ENCODE measurements at regions of chr15 and their contacts with region 1.

Region 1: GRCh38 chr15:77024271-77025082 is 29.6 kb downstream of the PSTPIP1 start:
- DNase-seq: peak; percentile 38 to 62 (median 51)
- H3K4me3 ChIP-seq: no peak overlapping the region
- H3K27ac ChIP-seq: no peak overlapping the region
- H3K4me1 ChIP-seq: peaks cover 2 to 59% (median 28%) of the 10 kb centered on the region in 4 experiments
- H3K27me3 ChIP-seq: no peaks in the 10 kb centered on the region

Region 2: DNA sequence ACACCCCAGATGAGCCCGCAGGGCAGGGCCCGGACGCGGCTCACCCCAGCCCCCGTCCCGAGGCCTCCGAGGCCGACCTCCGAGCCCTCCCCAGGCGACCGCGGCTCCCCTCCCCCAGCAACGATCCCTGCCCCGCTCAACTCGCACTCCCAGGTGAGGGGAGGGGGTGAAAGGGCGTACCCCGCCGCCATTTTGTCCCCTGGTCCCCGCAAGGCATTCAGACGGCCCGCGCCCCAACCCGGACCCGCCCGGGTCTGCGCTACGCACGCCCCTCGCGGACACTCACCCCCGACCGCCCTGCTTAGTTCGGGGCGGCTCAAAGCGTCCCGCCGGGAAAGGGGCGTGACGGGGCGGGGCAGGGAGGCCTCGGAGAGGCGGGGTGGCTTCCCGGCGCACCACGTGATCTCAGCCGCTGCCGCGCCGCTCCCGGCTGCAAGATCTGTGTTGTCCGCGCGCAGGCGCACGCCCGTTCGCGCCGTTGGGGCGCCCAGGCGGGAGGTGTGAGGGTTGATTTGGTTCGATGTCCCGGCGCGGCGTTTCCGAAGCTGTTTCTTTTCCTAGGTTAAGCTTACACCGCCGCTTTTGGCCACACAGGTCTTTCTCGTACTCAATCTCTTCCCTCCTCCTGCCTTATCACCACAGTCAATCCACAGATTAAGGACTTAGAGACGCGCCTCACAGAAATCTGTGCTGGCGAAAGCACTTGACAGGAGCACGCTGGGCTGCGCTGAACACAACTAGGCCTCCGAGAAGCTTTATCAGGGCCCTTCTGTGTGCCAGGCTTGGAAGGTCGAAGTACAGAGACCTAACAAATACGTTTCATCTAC is 119.3 kb before region 1 on chr15 and contains the start of gene SCAPER:
- CTCF ChIA-PET with region 1: no interaction called
- POLR2A ChIA-PET with region 1: no interaction called
- DNase-seq: peak; percentile 85 to 92 (median 90)
- H3K4me3 ChIP-seq: peak within 1 kb of the TSS; percentile 66 to 87 (median 79)
- H3K27ac ChIP-seq: peak within 1 kb of the TSS; percentile 40 to 75
- H3K4me1 ChIP-seq: peaks cover 12 to 34% (median 26%) of the 10 kb centered on the region in 4 experiments
- H3K27me3 ChIP-seq: no peaks in the 10 kb centered on the region

Region 3: DNA sequence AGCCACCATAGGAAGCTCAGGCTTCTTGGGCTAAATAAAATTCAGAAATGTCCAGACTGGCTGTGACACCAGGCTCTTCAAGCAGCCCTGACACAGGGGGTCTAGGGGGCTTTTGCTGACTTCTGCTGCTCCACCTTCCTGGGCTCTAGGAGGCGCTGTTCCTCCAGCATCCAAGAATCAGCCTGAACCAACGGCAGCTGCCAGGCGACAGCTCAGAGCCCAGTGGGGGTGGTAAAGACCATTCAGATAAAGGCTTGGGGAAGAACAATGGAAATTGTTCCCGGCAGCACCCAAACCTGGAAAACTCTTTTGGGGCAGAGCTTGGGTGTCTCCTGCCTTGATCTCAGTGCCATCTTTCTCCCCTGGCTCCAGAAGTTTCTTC is 51.1 kb before region 1 on chr15:
- CTCF ChIA-PET with region 1: interaction called, 269 read pairs
- POLR2A ChIA-PET with region 1: no interaction called
- DNase-seq: peak; percentile 72 to 84 (median 80)
- H3K4me3 ChIP-seq: no peak overlapping the region
- H3K27ac ChIP-seq: no peak overlapping the region
- H3K4me1 ChIP-seq: peaks cover 0 to 13% (median 7%) of the 10 kb centered on the region in 4 experiments
- H3K27me3 ChIP-seq: no peaks in the 10 kb centered on the region

Region 4: DNA sequence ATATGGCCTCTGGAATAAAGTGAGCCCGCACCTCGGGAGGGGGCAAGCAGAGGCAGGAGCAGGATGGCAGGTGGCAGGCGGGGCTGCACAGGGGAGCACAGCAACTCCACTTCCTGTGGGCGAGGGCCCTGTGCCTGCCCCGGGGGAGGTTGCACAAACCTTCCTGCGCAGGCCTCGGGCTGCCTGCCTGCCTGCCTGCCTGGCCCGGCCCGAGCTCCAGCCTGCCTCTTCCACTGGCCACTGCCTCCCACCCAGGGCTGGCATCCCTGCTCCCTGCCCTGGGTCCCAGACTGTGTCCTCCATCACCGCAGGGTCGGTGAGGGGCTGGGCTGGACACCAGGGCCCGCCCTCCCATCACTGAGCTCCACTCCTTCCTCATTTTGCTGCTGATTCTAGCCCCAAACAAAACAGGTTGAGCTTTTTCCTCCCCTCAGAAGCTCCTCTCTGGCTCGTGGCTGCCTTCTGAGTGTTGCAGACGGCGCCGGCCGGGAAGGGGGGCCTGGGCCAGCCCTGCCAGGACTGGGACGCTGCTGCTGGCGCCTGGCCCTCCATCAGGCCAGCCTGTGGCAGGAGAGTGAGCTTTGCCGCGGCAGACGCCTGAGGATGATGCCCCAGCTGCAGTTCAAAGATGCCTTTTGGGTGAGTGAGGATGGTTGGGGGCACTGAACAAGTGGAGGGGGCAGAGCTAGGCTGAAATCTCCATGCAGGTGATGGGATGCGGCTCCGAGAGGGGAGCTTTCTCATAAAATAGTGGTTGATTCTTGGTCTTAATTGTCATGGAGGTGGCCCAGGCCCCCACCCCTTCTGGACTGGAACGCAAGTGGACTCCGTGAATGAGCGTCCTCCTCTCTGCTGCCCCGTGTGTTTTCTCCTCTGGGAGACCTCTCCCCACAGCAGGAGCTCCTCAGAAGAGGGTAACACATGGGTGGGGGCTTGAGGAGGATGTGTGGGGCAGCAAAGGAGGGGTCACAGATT is 29.2 kb before region 1 on chr15 and contains the start of gene PSTPIP1:
- CTCF ChIA-PET with region 1: interaction called, 12 read pairs
- POLR2A ChIA-PET with region 1: no interaction called
- DNase-seq: peak; percentile 36 to 86 (median 76)
- H3K4me3 ChIP-seq: peak within 1 kb of the TSS; percentile 20 to 76 (median 61)
- H3K27ac ChIP-seq: peak within 1 kb of the TSS in 1 of 2 experiments; percentile 50
- H3K4me1 ChIP-seq: peaks cover 3 to 77% (median 37%) of the 10 kb centered on the region in 4 experiments
- H3K27me3 ChIP-seq: no peaks in the 10 kb centered on the region

Region 5: DNA sequence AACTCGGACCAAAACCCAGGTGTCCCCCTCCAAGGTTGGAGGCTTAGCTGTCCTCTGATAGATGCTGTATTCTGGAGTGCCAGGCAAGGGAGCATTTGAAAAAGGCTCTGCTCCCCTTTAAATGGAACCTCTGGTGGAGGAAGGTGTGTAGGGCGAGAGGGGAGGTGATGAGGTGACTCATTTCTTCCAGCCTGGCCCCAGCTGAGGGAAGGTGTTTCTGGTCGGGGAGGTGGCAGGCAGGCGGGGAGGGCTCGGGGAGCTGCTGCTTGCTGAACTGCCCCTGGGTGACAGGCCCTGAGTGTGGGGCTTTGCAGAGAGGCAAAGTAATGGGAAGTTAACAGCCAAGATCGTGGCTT is 10.7 kb before region 1 on chr15:
- CTCF ChIA-PET with region 1: interaction called, 11 read pairs
- POLR2A ChIA-PET with region 1: no interaction called
- DNase-seq: peak; percentile 40 to 78 (median 75)
- H3K4me3 ChIP-seq: peak overlapping the region in 2 of 7 experiments; percentile 4 to 8
- H3K27ac ChIP-seq: no peak overlapping the region
- H3K4me1 ChIP-seq: peaks cover 6 to 63% (median 49%) of the 10 kb centered on the region in 4 experiments
- H3K27me3 ChIP-seq: no peaks in the 10 kb centered on the region

Region 6: DNA sequence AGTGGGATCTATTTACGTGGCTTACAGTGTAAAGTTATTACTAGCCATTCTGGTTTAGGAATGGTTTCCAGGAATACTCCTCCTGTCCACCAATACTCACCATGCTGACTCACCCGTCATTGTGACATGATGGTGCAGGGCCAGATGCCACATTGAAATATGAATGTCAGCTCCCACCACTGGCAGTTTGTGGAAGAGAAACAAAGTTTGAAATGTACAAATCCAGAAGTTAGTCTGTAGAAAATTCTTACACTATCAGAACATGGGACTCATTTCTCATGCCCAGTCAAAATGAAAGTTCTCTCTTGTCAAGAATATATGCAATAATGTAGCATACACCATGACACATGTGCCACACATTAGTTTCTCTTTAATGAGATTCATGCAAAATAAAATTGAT is 60.8 kb after region 1 on chr15:
- CTCF ChIA-PET with region 1: no interaction called
- POLR2A ChIA-PET with region 1: no interaction called
- DNase-seq: peak in 2 of 3 donors; percentile 18 to 28
- H3K4me3 ChIP-seq: no peak overlapping the region
- H3K27ac ChIP-seq: no peak overlapping the region
- H3K4me1 ChIP-seq: peaks cover 0 to 12% (median 6%) of the 10 kb centered on the region in 4 experiments
- H3K27me3 ChIP-seq: no peaks in the 10 kb centered on the region

Region 7: GRCh38 chr15:78859971-78860732 is 1835.7 kb after region 1 on chr15:
- CTCF ChIA-PET with region 1: no interaction called
- POLR2A ChIA-PET with region 1: interaction called, 11 read pairs
- DNase-seq: peak; percentile 83 to 93 (median 91)
- H3K4me3 ChIP-seq: peak overlapping the region; percentile 29 to 90 (median 75)
- H3K27ac ChIP-seq: no peak overlapping the region
- H3K4me1 ChIP-seq: peaks cover 0 to 5% (median under 1%) of the 10 kb centered on the region in 4 experiments
- H3K27me3 ChIP-seq: no peaks in the 10 kb centered on the region

Measured in common myeloid progenitor, CD34-positive (primary cell).